Right lobe of liver (tissue), 6 donors: ENCODE measurements at regions of chr12 and their contacts with region 1.

Region 1: GRCh38 chr12:95815635-95816212 is 25.2 kb upstream of the NTN4 start:
- DNase-seq: no peak
- ATAC-seq: peak; percentile 71 to 80 (median 78)
- H3K4me3 ChIP-seq: no peak overlapping the region
- H3K27ac ChIP-seq: no peak overlapping the region
- H3K4me1 ChIP-seq: no peaks in the 10 kb centered on the region
- H3K27me3 ChIP-seq: no peaks in the 10 kb centered on the region
- CTCF ChIP-seq: peak; percentile 74 to 82 (median 78)
- POLR2A ChIP-seq: no peak

Region 2: DNA sequence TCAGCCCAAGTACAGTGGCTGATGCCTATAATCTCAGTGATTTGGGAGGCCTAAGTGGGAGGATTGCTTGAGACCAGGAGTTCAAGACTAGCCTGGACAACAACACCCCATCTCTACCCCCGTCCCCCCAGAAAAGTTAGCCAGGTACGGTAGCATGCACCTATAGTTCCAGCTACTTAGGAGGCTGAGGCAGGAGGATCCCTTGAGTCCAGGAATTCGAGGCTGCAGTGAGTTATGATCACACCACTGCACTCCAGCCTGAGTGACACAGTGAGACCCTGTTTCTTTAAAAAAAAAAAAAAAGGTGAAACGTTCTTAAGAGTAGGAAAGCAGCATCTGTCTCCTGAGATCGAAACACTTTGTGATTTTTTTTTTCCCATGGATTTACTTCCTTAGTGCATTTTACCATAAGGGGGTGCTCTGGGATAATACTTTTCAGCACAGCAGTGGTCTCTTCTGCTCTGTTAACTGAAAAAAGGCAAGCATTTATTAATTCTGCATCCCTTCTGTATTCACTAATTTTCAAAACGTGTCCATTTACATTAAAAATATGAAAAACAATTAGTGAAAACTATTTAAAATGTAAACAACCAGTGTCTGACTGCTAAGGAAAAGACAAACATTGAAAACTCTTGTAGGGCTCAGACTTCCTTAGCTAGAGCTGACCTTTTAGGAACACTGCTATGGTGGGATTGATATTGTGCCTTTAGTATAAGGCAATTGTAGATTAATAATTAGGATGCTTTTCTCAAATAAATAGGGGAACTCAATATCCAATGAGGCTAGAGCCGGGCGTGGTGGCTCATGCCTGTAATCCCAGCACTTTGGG is 233.3 kb before region 1 on chr12:
- intact Hi-C with region 1: loop called in 1 of 2 experiments (anchors 10 kb)
- DNase-seq: no peak
- ATAC-seq: peak; percentile 46 to 76 (median 54)
- H3K4me3 ChIP-seq: no peak overlapping the region
- H3K27ac ChIP-seq: no peak overlapping the region
- H3K4me1 ChIP-seq: no peaks in the 10 kb centered on the region
- H3K27me3 ChIP-seq: no peaks in the 10 kb centered on the region
- CTCF ChIP-seq: peak; percentile 33 to 54 (median 52)
- POLR2A ChIP-seq: no peak